ENCODE measurements at regions of chr6 and their contacts with region 1.

Region 1: DNA sequence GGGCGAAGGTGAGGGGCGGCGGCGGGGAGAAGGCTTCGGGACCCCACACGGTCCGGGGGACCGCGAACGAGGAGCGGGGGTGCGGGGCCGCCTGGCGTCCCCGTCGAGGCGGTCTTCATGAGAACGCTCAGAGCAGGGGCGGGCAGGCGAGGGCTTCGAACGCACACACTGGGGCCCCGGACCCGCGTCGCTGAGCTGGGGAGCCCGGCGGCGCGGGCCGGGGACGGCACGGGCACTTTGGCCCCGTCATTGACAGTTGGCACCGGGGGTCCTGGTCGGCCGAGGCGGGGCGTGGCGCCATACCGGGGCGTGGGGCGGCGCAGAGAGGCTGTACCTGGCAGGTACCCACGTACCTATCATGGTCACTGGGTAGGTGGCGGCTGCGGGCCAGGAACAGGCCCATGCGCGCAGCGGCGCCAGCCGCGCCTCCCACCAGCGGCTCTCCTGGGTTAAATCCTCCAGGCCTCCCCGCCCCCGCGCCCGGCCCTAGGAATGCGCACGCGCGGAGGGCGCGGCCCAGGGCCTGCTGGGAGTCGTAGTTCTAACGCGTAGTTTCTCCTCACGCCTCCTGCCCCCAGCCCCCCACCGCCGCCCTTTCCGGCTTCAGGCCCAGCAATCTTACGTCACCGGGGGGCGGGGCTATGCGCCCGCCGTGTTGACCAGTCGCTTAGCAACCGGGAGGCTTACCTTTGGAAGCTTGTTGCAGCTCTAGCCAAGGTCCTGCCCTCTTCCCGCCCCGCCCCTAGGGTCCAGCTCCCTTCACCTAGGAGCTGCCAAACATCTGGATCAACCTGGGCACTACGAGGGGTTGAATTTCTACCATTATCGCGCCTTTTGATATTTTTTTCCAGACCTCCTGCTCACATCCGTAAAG is at the starts of genes PACRG and PRKN:
- DNase-seq: peak; percentile 98
- total RNA-seq, gene PACRG: 14.1 TPM
- total RNA-seq, gene PRKN: 23.2 TPM

Region 2: GRCh38 chr6:162271922-162272321 is 455.6 kb before region 1 on chr6:
- intact Hi-C with region 1: no loop called
- DNase-seq: no peak

Region 3: DNA sequence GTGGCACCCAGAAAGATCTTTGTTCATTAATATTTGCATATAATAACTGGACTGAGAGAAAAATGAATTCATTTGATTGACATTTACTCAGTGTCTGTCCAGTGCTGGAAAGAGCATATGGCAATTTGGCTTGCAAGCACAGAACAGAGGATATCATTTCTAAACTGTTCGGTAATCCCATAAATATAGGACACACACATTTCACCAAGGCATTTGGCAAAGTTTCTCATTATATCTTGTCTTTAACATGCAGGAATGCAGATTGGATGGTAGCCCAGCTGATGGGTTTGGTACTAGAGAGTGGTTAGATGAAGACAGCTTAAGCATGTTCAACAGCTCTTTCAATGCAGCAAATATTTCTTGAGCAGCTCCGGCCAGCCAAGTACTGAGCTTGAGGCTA is 259.2 kb before region 1 on chr6:
- intact Hi-C with region 1: loop called (anchors 5 kb)
- DNase-seq: no peak

Measured in cardiac septum (tissue), 1 donor.